ENCODE measurements at regions of chr1 and their contacts with region 1.

Region 1: GRCh38 chr1:192489748-192490147 is 85.8 kb upstream of the RGS1 start:
- DNase-seq: peak; percentile 95
- H3K4me3 ChIP-seq: no peak overlapping the region
- H3K27ac ChIP-seq: peak overlapping the region; percentile 53
- H3K4me1 ChIP-seq: peaks cover 4% of the 10 kb centered on the region
- H3K27me3 ChIP-seq: no peaks in the 10 kb centered on the region
- CTCF ChIP-seq: no peak
- POLR2A ChIP-seq: no peak

Region 2: GRCh38 chr1:192516776-192517297 is 27.1 kb after region 1 on chr1:
- CTCF ChIA-PET with region 1: no interaction called
- POLR2A ChIA-PET with region 1: no interaction called
- dilution Hi-C with region 1: no loop called
- intact Hi-C with region 1: loop called (anchors 2 kb)
- DNase-seq: no peak
- H3K4me3 ChIP-seq: no peak overlapping the region
- H3K27ac ChIP-seq: no peak overlapping the region
- H3K4me1 ChIP-seq: peaks cover 20% of the 10 kb centered on the region
- H3K27me3 ChIP-seq: no peaks in the 10 kb centered on the region
- CTCF ChIP-seq: no peak
- POLR2A ChIP-seq: no peak

Region 3: DNA sequence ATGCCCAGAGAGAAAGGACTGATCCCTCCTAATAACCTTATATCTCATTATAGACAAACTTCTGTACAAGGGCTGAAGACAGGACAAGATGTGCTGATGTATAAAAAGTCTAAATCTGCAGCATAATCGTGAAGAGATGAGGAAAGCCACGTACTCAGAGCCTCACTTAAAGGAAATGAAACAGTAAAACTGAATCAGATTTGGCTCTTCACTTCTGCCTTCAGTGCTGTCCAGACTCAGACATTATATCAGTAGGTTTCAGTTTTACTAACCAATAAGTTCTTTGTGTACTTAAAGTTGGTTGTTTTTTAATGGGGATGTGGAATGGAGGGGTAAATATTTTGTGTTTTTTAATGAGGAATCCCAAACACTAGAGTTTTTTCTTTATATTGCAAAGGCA is 40.5 kb after region 1 on chr1:
- CTCF ChIA-PET with region 1: no interaction called
- POLR2A ChIA-PET with region 1: no interaction called
- dilution Hi-C with region 1: no loop called
- intact Hi-C with region 1: loop called (anchors 2 kb)
- DNase-seq: peak; percentile 61
- H3K4me3 ChIP-seq: no peak overlapping the region
- H3K27ac ChIP-seq: peak overlapping the region; percentile 75
- H3K4me1 ChIP-seq: peaks cover 26% of the 10 kb centered on the region
- H3K27me3 ChIP-seq: no peaks in the 10 kb centered on the region
- CTCF ChIP-seq: no peak
- POLR2A ChIP-seq: no peak

Region 4: DNA sequence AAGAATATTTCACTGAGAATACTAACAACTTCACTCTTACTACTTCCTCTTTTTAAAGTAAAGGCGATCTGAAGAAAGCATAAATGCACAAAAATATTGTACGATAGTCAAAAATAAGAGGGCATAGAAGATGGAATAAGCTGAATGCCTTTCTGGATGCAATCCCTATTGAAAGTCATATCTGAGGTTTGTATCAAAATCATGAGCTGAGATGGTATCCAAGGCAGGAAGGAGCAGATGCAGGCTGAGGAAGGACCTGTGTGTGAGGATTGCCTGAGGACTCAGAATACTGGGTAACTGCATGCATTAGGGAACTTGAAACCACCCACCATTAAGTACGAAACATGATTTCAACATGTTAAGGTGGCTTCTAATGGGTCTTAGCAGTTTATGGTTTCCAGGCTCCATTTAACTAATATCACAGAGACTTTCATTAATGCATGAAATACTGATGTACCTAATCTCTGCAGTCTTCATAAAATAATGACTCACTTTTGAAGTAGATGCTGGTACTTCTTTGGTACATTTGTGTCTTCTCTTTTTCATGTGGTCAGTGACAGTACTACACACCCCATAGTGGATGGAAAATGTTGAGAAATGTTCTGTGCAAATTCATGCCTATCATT is 56.3 kb after region 1 on chr1:
- CTCF ChIA-PET with region 1: interaction called, 5 read pairs
- POLR2A ChIA-PET with region 1: no interaction called
- dilution Hi-C with region 1: no loop called
- intact Hi-C with region 1: loop called (anchors 2 kb)
- DNase-seq: peak; percentile 34
- H3K4me3 ChIP-seq: no peak overlapping the region
- H3K27ac ChIP-seq: peak overlapping the region; percentile 40
- H3K4me1 ChIP-seq: peaks cover 38% of the 10 kb centered on the region
- H3K27me3 ChIP-seq: no peaks in the 10 kb centered on the region
- CTCF ChIP-seq: peak in 1 of 2 donors; percentile 8
- POLR2A ChIP-seq: no peak

Region 5: GRCh38 chr1:192654591-192655251 is 165.0 kb after region 1 on chr1:
- CTCF ChIA-PET with region 1: no interaction called
- POLR2A ChIA-PET with region 1: no interaction called
- dilution Hi-C with region 1: no loop called
- intact Hi-C with region 1: no loop called
- DNase-seq: peak; percentile 30
- H3K4me3 ChIP-seq: no peak overlapping the region
- H3K27ac ChIP-seq: no peak overlapping the region
- H3K4me1 ChIP-seq: no peaks in the 10 kb centered on the region
- H3K27me3 ChIP-seq: no peaks in the 10 kb centered on the region
- CTCF ChIP-seq: no peak
- POLR2A ChIP-seq: no peak